ENCODE measurements at regions of chrX and their contacts with region 1.

Region 1: GRCh38 chrX:65697915-65698796 is 30.7 kb downstream of the MSN start:
- DNase-seq: peak; percentile 87
- ATAC-seq: peak; percentile 78
- H3K4me3 Mint-ChIP-seq: peak overlapping the region; percentile 58
- H3K27ac Mint-ChIP-seq: peak overlapping the region; percentile 98
- H3K4me1 Mint-ChIP-seq: peaks cover 80% of the 10 kb centered on the region
- H3K27me3 Mint-ChIP-seq: no peaks in the 10 kb centered on the region
- CTCF ChIP-seq: no peak

Region 2: DNA sequence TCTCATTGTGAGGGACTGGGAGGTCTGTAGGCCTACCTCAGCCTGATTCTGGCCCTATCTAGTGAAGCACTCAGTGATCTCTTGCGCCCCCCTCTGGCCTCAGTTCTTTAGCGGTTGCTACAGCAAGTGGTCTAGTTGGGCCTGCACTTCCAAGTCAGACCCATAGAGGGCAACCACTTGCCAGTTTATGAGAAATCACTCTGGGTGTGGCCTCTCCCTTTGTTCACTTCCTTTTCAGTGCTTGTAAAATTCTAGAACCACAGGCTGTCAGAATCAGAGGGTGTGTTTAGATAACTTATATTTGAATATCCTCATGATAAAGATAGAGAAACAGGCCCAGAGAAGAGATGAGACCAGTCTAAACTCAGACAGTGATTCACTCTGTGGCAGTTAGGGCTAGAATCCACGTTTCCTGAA is 102.7 kb before region 1 on chrX:
- CTCF ChIA-PET with region 1: no interaction called
- POLR2A ChIA-PET with region 1: interaction called, 4 read pairs
- intact Hi-C with region 1: loop called (anchors 2 kb)
- DNase-seq: peak; percentile 99
- ATAC-seq: peak; percentile 88
- H3K4me3 Mint-ChIP-seq: peak overlapping the region; percentile 61
- H3K27ac Mint-ChIP-seq: peak overlapping the region; percentile 88
- H3K4me1 Mint-ChIP-seq: peaks cover 54% of the 10 kb centered on the region
- H3K27me3 Mint-ChIP-seq: no peaks in the 10 kb centered on the region
- CTCF ChIP-seq: peak; percentile 76

Region 3: GRCh38 chrX:65667503-65668376 is 30.4 kb before region 1 on chrX and contains the start of gene MSN:
- CTCF ChIA-PET with region 1: interaction called, 10 read pairs
- POLR2A ChIA-PET with region 1: interaction called, 23 read pairs
- intact Hi-C with region 1: loop called (anchors 2 kb)
- DNase-seq: peak; percentile 81
- ATAC-seq: peak; percentile 74
- H3K4me3 Mint-ChIP-seq: peak within 1 kb of the TSS; percentile 95
- H3K27ac Mint-ChIP-seq: peak within 1 kb of the TSS; percentile 96
- H3K4me1 Mint-ChIP-seq: peaks cover 27% of the 10 kb centered on the region
- H3K27me3 Mint-ChIP-seq: no peaks in the 10 kb centered on the region
- CTCF ChIP-seq: no peak
- total RNA-seq, gene MSN: 426 to 435 TPM

Region 4: GRCh38 chrX:65674204-65674893 is 23.8 kb before region 1 on chrX:
- CTCF ChIA-PET with region 1: interaction called, 10 read pairs
- POLR2A ChIA-PET with region 1: interaction called, 23 read pairs
- intact Hi-C with region 1: loop called (anchors 2 kb)
- DNase-seq: peak; percentile 34
- ATAC-seq: peak; percentile 44
- H3K4me3 Mint-ChIP-seq: peak overlapping the region; percentile 95
- H3K27ac Mint-ChIP-seq: peak overlapping the region; percentile 94
- H3K4me1 Mint-ChIP-seq: peaks cover 61% of the 10 kb centered on the region
- H3K27me3 Mint-ChIP-seq: no peaks in the 10 kb centered on the region
- CTCF ChIP-seq: no peak

Region 5: GRCh38 chrX:65723706-65724105 is 25.6 kb after region 1 on chrX:
- CTCF ChIA-PET with region 1: interaction called, 3 read pairs
- POLR2A ChIA-PET with region 1: interaction called, 12 read pairs
- intact Hi-C with region 1: no loop called
- DNase-seq: peak; percentile 63
- ATAC-seq: peak; percentile 88
- H3K4me3 Mint-ChIP-seq: peak overlapping the region; percentile 38
- H3K27ac Mint-ChIP-seq: peak overlapping the region; percentile 94
- H3K4me1 Mint-ChIP-seq: peaks cover 86% of the 10 kb centered on the region
- H3K27me3 Mint-ChIP-seq: no peaks in the 10 kb centered on the region
- CTCF ChIP-seq: no peak

Region 6: DNA sequence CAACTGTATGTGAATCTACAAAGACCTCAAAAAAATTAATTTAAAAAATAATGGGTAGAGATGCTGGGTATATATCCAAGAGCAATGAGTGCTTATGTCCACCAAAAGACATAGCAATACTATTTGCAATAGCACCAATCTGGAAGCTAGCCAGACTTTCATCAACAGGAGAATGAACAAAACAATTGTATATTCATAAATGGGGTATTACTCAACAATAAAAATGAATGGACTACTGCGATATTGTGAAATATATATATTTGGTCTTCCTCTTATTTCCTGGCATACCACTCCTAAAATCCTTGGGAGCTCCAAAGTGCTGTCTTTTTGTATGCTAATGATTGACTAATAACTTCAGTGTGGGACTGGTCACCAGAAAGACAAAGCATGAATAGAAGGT is 46.8 kb after region 1 on chrX:
- CTCF ChIA-PET with region 1: no interaction called
- POLR2A ChIA-PET with region 1: no interaction called
- intact Hi-C with region 1: loop called (anchors 5 kb)
- DNase-seq: no peak
- ATAC-seq: no peak
- H3K4me3 Mint-ChIP-seq: no peak overlapping the region
- H3K27ac Mint-ChIP-seq: no peak overlapping the region
- H3K4me1 Mint-ChIP-seq: peaks cover 61% of the 10 kb centered on the region
- H3K27me3 Mint-ChIP-seq: no peaks in the 10 kb centered on the region
- CTCF ChIP-seq: no peak

Region 7: GRCh38 chrX:65985922-65986588 is 287.9 kb after region 1 on chrX:
- CTCF ChIA-PET with region 1: no interaction called
- POLR2A ChIA-PET with region 1: no interaction called
- intact Hi-C with region 1: loop called (anchors 10 kb)
- DNase-seq: peak; percentile 71
- ATAC-seq: peak; percentile 100
- H3K4me3 Mint-ChIP-seq: no peak overlapping the region
- H3K27ac Mint-ChIP-seq: peak overlapping the region; percentile 83
- H3K4me1 Mint-ChIP-seq: peaks cover 23% of the 10 kb centered on the region
- H3K27me3 Mint-ChIP-seq: no peaks in the 10 kb centered on the region
- CTCF ChIP-seq: peak; percentile 32

Measured in activated CD8-positive, alpha-beta T cell treated with anti-CD3 and anti-CD28 coated beads for 36 hours (primary cell).